Activated B cell treated with CpG ODN at 0.5 μM for 24 hours (primary cell): ENCODE measurements at regions of chr6 and their contacts with region 1.

Region 1: DNA sequence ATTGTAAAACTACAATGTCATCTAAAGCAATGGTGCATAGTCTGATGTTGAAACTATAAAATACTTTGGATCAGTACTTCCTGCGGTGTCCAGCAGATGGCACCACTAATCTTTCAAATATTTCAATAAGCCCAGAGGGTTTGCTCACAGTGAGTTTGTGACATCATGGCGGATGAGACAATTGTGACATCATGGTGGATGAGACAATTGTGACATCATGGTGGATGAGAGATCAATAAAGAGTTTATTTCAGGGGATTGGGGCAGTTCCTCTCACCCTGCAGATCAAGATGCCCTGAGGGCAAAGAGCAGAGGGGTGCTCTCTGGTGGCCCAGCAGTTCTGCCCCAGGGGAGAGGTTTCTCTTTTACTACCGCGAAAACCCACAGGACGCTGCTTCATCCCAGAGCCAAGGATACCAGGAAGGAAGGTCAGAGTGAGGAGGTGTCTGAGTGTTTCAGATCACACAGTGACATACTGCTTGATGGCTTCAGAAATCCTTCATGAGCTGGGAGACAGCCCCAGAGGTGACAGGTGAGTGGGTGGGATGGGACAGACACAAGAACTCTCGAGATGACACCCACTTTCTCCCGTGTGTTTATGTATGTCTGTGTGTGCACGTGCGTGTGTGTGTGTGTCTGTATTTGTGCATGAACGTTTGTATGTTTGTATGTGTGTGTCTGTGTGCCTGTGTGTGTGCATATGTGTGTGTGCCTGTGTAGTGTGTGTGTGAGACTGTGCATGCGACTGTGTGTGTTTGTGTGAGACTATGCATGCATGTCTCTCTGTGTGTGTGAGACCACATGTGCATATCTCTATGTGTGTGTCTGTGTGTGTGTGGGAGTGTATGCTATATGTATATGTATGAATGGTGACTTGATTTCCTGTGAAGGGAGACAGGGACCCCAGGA is 7.3 kb upstream of the ULBP2 start:
- DNase-seq: no peak
- ATAC-seq: peak; percentile 33
- H3K4me3 Mint-ChIP-seq: no peak overlapping the region
- H3K27ac Mint-ChIP-seq: no peak overlapping the region
- H3K4me1 Mint-ChIP-seq: peaks cover 21% of the 10 kb centered on the region
- H3K27me3 Mint-ChIP-seq: peaks cover 72% of the 10 kb centered on the region
- CTCF ChIP-seq: no peak

Region 2: DNA sequence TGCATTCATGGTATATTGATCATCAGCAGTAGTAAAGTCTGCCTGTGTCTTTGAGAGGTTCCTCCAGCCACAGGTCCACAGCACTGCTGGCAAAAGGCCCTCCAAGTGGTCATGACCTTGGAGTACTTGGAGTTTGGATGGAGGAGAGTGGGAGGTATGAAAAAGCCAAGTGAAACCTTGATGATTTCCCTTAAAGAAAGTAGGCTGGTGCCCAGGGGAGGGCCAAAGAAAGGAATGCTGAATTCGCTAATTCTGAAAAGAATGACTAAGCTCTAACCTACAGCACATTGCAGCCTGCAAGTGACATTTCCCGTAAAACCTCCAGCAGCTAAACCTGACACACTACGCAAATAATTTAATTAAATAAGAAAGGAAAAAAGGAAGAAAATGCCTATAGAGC is 840.3 kb before region 1 on chr6:
- CTCF ChIA-PET with region 1: no interaction called
- POLR2A ChIA-PET with region 1: no interaction called
- intact Hi-C with region 1: no loop called
- DNase-seq: no peak
- ATAC-seq: no peak
- H3K4me3 Mint-ChIP-seq: no peak overlapping the region
- H3K27ac Mint-ChIP-seq: no peak overlapping the region
- H3K4me1 Mint-ChIP-seq: peaks cover 2% of the 10 kb centered on the region
- H3K27me3 Mint-ChIP-seq: peaks cover 2% of the 10 kb centered on the region
- CTCF ChIP-seq: no peak

Region 3: GRCh38 chr6:149834513-149835481 is 99.7 kb before region 1 on chr6:
- CTCF ChIA-PET with region 1: no interaction called
- POLR2A ChIA-PET with region 1: no interaction called
- intact Hi-C with region 1: loop called (anchors 2 kb)
- DNase-seq: peak; percentile 25
- ATAC-seq: peak; percentile 56
- H3K4me3 Mint-ChIP-seq: no peak overlapping the region
- H3K27ac Mint-ChIP-seq: no peak overlapping the region
- H3K4me1 Mint-ChIP-seq: no peaks in the 10 kb centered on the region
- H3K27me3 Mint-ChIP-seq: peaks cover 13% of the 10 kb centered on the region
- CTCF ChIP-seq: peak; percentile 88

Region 4: GRCh38 chr6:150016324-150017185 is 82.1 kb after region 1 on chr6:
- CTCF ChIA-PET with region 1: interaction called, 27 read pairs
- POLR2A ChIA-PET with region 1: interaction called, 4 read pairs
- intact Hi-C with region 1: loop called (anchors 1 kb)
- DNase-seq: peak; percentile 36
- ATAC-seq: peak; percentile 85
- H3K4me3 Mint-ChIP-seq: no peak overlapping the region
- H3K27ac Mint-ChIP-seq: no peak overlapping the region
- H3K4me1 Mint-ChIP-seq: peaks cover 16% of the 10 kb centered on the region
- H3K27me3 Mint-ChIP-seq: peaks cover 62% of the 10 kb centered on the region
- CTCF ChIP-seq: no peak

Region 5: GRCh38 chr6:150334790-150335783 is 400.6 kb after region 1 on chr6:
- CTCF ChIA-PET with region 1: no interaction called
- POLR2A ChIA-PET with region 1: no interaction called
- intact Hi-C with region 1: loop called (anchors 2 kb)
- DNase-seq: no peak
- ATAC-seq: peak; percentile 45
- H3K4me3 Mint-ChIP-seq: no peak overlapping the region
- H3K27ac Mint-ChIP-seq: no peak overlapping the region
- H3K4me1 Mint-ChIP-seq: no peaks in the 10 kb centered on the region
- H3K27me3 Mint-ChIP-seq: peaks cover 11% of the 10 kb centered on the region
- CTCF ChIP-seq: peak; percentile 68

Region 6: GRCh38 chr6:150622941-150623874 is 688.7 kb after region 1 on chr6:
- CTCF ChIA-PET with region 1: no interaction called
- POLR2A ChIA-PET with region 1: no interaction called
- intact Hi-C with region 1: loop called (anchors 5 kb)
- DNase-seq: peak; percentile 40
- ATAC-seq: peak; percentile 87
- H3K4me3 Mint-ChIP-seq: peak overlapping the region; percentile 19
- H3K27ac Mint-ChIP-seq: peak overlapping the region; percentile 94
- H3K4me1 Mint-ChIP-seq: peaks cover 97% of the 10 kb centered on the region
- H3K27me3 Mint-ChIP-seq: no peaks in the 10 kb centered on the region
- CTCF ChIP-seq: no peak